ENCODE measurements at regions of chr19 and their contacts with region 1.

Region 1: DNA sequence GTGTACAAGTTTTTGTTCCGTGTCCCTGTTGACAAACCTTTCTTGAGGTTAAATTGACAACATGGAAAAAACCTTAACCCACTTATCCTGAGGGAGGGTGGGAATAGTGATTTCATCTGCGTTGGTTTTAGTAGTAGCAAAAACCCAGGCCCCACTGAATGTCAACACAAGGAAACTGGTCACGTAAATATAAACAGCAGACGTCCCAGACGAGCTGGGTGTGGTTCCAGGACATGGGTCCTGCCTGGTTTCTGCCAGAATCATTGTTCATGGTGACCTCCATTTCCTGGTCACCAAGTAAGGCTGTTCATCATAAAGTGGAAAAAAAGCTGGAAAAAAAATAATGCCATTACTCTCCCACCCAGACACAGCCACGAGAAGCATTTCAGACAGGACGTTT is 16.9 kb upstream of the F2RL3 start:
- DNase-seq: no peak
- ATAC-seq: no peak
- H3K4me3 ChIP-seq: no peak overlapping the region
- H3K27ac ChIP-seq: no peak overlapping the region
- H3K4me1 ChIP-seq: no peaks in the 10 kb centered on the region
- H3K27me3 ChIP-seq: no peaks in the 10 kb centered on the region
- CTCF ChIP-seq: no peak
- POLR2A ChIP-seq: no peak
- RAD21 ChIP-seq: no peak

Region 2: DNA sequence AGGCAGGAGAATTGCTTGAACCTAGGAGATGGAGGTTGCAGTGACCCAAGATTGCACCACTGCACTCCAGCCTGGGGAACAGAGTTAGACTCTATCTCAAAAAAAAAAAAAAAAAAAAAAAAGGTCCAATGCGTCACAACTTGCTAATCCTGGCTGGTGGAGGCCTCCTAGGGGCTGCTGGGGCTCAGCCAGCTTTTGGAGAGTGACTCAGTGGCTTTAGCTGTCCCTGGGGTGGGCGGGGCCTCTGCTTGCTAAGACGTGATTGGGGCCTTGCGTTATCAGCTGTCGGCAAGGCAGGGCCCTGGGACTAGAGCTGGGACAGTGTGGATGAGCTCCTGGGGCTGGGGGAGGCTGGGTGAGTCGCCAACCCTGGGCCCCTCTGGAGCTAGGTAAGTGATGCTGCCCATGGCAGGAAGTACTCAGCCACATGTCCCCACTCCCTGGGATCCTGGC is 48.9 kb after region 1 on chr19:
- CTCF ChIA-PET with region 1: no interaction called
- POLR2A ChIA-PET with region 1: no interaction called
- RAD21 ChIA-PET with region 1: no interaction called
- intact Hi-C with region 1: loop called (anchors 1 kb)
- DNase-seq: peak; percentile 42
- ATAC-seq: peak; percentile 83
- H3K4me3 ChIP-seq: no peak overlapping the region
- H3K27ac ChIP-seq: no peak overlapping the region; the same call in 1 of the 2 replicates
- H3K4me1 ChIP-seq: peaks cover 7 to 14% of the 10 kb centered on the region in 2 experiments
- H3K27me3 ChIP-seq: no peaks in the 10 kb centered on the region
- CTCF ChIP-seq: no peak
- POLR2A ChIP-seq: no peak
- RAD21 ChIP-seq: no peak

Region 3: DNA sequence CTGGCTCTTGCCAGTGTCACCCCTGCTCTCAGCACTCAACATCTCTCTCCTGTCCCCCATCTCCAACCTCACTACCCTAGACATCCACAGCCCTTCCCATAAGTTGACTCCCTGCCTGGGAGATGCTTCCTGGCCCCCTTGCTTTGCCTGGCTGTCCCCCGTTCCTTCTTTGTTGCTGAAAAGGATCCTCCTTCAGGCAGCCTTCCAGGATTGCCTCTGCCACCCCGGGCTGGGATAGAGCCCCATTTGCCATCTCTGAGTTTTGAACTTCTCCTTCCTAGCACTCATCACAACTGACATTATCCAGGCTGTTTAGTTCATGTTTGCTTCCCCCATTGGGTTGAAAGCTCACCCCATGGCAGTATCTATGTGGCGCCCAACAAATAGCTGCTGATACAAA is 134.7 kb after region 1 on chr19:
- CTCF ChIA-PET with region 1: no interaction called
- POLR2A ChIA-PET with region 1: no interaction called
- RAD21 ChIA-PET with region 1: no interaction called
- intact Hi-C with region 1: no loop called
- DNase-seq: no peak
- ATAC-seq: no peak
- H3K4me3 ChIP-seq: no peak overlapping the region
- H3K27ac ChIP-seq: no peak overlapping the region
- H3K4me1 ChIP-seq: no peaks in the 10 kb centered on the region
- H3K27me3 ChIP-seq: no peaks in the 10 kb centered on the region; the same call in 1 of the 2 replicates
- CTCF ChIP-seq: no peak
- POLR2A ChIP-seq: no peak
- RAD21 ChIP-seq: no peak